K562 (cell line): ENCODE measurements at regions of chr7 and their contacts with region 1.

Region 1: DNA sequence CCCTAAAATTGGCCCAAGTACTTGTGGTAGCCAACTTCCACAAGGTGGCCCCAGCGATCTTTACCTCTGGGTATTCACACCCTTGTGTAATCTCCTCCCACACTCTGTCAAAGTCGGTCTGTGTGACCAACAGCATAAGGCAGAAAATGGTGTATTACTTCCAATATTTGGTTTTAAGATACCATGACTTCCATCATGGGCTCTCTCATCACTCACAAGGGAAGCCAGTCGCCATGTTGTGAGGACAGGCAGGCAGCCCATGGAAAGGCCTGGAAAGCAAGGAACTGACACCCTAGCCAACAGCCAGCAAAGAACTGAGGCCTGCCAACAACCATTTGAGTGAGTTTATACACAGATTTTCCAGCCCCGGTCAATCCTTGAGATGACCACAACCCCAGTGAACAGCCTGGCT is 91.0 kb upstream of the KMT2E start:
- DNase-seq: peak; percentile 54 to 93 (median 68)
- ATAC-seq: peak; percentile 98
- H3K4me3 ChIP-seq: no peak overlapping the region
- H3K27ac ChIP-seq: no peak overlapping the region
- H3K4me1 ChIP-seq: peaks cover 0 to 5% of the 10 kb centered on the region in 2 experiments; a peak in 2 of 5 replicates
- H3K27me3 ChIP-seq: no peaks in the 10 kb centered on the region
- CTCF ChIP-seq: peak; percentile 91 to 98 (median 95)
- EP300 ChIP-seq: peak; percentile 51
- POLR2A ChIP-seq: no peak
- RAD21 ChIP-seq: peak; percentile 94 to 99

Region 2: DNA sequence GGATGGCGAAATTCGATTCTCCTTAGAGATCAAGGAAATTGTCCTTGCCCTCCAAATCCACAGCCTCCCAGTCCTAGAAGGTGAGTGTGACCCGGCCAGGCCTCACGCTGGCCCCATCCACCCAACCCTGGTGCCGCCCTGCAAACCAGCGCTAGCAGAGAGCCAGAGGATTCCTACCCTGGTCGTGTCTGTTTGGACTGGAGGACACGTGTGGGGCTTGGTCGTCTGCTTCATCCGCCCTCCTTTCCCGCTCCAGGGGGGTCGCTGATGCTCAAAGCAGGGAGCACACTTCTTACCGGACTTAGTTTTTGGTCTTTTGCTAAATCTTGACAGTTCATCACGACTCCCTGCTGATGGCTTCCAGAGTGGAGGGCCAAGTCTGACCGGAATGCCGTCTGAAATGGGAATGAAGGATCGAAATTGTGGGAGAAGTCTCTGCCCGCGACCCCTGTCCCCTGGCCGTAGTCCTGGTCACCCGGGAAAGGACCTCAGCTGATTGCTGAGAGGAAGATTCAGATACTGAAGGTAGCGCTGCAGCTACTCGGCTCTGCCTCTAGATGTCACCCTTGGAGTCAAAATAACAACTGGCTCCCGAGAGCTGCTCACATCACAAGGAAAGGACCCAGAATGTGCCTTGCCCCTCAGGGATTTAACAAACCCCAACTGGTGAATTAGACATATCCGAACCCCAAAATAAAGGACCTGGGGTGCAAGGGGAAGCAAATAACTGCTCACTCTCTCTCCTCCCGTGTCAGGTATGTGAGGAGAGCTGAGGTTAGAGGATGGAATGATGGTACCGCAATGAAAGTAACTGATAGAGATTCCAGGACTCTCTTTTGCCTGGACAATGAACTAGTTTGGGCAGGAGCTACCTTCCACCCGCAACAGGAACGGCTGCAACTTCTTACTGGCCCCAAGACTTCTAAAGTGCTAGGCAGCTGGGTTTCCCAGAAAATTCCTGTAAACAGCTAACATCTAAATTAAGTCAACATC is 691.7 kb before region 1 on chr7:
- CTCF ChIA-PET with region 1: interaction called, 5 read pairs
- POLR2A ChIA-PET with region 1: no interaction called
- in situ Hi-C with region 1: no loop called
- intact Hi-C with region 1: loop called (anchors 1 kb)
- DNase-seq: peak; percentile 52 to 76 (median 67)
- ATAC-seq: peak; percentile 99
- H3K4me3 ChIP-seq: no peak overlapping the region
- H3K27ac ChIP-seq: no peak overlapping the region
- H3K4me1 ChIP-seq: 0 out of 5 replicates have a peak, but pooled peaks cover 0 to 2% of the 10 kb centered on the region in 2 experiments
- H3K27me3 ChIP-seq: 0 out of 5 replicates have a peak, but pooled peaks cover 0 to 3% of the 10 kb centered on the region in 2 experiments
- CTCF ChIP-seq: peak; percentile 86 to 97 (median 91)
- EP300 ChIP-seq: no peak
- POLR2A ChIP-seq: no peak
- RAD21 ChIP-seq: peak; percentile 66 to 80

Region 3: GRCh38 chr7:104524850-104525249 is 398.2 kb before region 1 on chr7:
- CTCF ChIA-PET with region 1: no interaction called
- POLR2A ChIA-PET with region 1: no interaction called
- in situ Hi-C with region 1: no loop called
- intact Hi-C with region 1: no loop called
- DNase-seq: no peak
- ATAC-seq: no peak
- H3K4me3 ChIP-seq: no peak overlapping the region
- H3K27ac ChIP-seq: no peak overlapping the region
- H3K4me1 ChIP-seq: no peaks in the 10 kb centered on the region
- H3K27me3 ChIP-seq: no peaks in the 10 kb centered on the region
- CTCF ChIP-seq: no peak
- EP300 ChIP-seq: no peak
- POLR2A ChIP-seq: no peak
- RAD21 ChIP-seq: no peak

Region 4: DNA sequence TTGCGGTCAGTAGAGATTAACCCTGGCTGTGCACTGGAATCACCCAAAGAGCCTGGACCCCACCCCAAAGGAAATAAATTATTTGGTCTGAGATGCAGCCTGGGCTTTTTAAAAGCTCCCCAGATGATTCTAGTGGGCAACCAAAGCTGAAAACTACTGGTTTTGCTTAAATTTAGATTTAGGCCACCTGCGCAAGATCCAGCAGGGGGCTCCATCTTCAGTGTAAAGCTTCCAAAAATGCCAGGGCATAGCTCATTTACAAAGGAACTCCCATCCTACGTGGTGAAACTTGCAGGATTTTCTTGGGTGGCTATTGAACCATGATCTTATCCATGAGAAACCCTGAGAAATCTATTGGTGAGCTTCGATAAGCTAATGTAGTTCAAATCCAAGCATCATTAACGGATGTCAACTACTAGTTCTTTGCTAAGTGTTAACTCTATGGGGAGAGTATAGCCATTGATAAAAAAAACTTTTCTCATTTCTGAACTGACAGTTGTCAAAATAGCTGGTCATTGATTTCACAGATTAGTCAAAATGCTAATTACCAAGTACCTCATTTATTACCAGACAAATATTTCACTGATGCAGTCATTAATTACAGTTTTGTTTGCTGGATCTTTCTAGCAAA is 279.3 kb before region 1 on chr7:
- CTCF ChIA-PET with region 1: interaction called, 5 read pairs
- POLR2A ChIA-PET with region 1: no interaction called
- in situ Hi-C with region 1: no loop called
- intact Hi-C with region 1: loop called (anchors 1 kb)
- DNase-seq: peak; percentile 15 to 35 (median 26)
- ATAC-seq: peak; percentile 57
- H3K4me3 ChIP-seq: no peak overlapping the region
- H3K27ac ChIP-seq: no peak overlapping the region
- H3K4me1 ChIP-seq: no peaks in the 10 kb centered on the region
- H3K27me3 ChIP-seq: peaks cover 3 to 7% of the 10 kb centered on the region in 2 experiments; a peak in 3 of 5 replicates
- CTCF ChIP-seq: peak; percentile 57 to 68 (median 66)
- EP300 ChIP-seq: no peak
- POLR2A ChIP-seq: no peak
- RAD21 ChIP-seq: peak; percentile 51 to 59; a peak in 3 of 4 replicates

Region 5: DNA sequence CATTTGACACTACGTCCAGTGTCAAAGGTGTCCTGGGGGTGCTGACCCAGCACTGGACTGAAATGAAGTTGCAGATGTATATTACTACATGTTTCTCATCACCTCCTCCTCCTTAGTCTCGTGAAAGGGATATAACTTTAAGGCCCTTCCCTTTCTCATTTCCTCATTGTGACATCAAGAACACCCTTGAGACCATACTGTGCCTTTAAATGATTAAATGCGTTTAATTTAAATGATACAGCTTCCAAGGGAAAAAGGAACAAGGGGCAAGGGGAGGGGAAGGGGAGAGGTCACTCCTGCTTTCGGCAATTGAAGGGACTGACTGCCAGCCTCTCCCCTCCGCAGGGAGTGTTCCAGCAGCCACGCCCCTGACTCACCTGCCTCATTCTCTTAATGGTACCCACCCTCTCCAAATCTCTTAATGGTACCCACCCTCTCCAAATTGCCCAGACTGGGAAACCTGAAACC is 10.5 kb after region 1 on chr7:
- CTCF ChIA-PET with region 1: no interaction called
- POLR2A ChIA-PET with region 1: no interaction called
- in situ Hi-C with region 1: no loop called
- intact Hi-C with region 1: no loop called
- DNase-seq: no peak
- ATAC-seq: no peak
- H3K4me3 ChIP-seq: no peak overlapping the region
- H3K27ac ChIP-seq: no peak overlapping the region
- H3K4me1 ChIP-seq: no peaks in the 10 kb centered on the region; a peak in 1 of 5 replicates
- H3K27me3 ChIP-seq: peaks cover 10 to 20% of the 10 kb centered on the region in 2 experiments; a peak in 4 of 5 replicates
- CTCF ChIP-seq: no peak
- EP300 ChIP-seq: no peak
- POLR2A ChIP-seq: no peak
- RAD21 ChIP-seq: no peak

Region 6: DNA sequence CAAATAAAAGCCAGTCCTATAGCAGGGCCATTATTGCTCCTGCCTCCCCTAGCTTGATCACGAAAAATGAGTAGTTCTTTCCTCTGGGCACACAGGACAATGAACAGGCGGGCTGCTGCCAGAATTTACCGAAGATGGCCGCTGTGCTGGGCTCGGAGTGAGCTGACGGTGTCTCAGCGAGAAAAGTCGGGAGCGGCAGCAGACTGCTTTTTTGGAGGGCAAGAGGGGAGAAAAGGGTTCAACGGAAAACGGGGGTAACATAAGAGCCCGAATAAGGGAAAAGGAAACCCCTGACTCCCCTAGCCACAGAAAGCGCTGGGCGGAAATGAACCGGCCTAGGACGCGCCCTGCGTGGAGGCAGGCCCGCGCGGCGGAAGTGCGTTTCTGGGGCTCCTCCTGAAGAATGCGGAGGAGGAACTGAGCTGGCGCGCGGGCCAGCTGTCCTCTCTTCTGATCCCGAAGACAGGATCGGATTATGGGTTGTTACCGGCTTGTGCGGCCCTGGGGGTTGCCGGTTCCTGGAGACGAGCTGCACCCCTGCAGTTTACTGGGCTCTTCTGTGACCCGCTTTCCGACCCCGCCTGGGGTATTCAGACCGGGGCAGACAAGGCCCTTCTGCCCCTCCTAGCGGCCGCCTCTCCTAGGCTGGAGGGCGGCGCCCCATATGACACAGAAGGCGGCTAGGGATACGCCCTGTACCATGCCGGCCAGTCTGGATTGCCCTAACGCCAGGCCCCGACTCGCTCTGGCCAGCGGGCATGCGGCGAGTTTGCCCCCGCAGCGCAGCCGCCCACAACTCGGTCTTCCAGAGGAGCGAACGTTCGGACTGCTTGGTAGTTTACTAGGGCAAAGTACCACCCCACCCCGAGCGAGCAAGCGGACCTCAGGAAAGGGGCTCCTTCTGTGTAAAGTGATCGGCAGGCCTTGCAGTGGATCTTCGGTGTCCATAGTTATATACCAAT is 60.8 kb after region 1 on chr7:
- CTCF ChIA-PET with region 1: interaction called, 10 read pairs
- POLR2A ChIA-PET with region 1: interaction called, 4 read pairs
- in situ Hi-C with region 1: no loop called
- intact Hi-C with region 1: loop called (anchors 1 kb)
- DNase-seq: peak; percentile 89 to 95 (median 92)
- ATAC-seq: peak; percentile 98
- H3K4me3 ChIP-seq: peak overlapping the region; percentile 58
- H3K27ac ChIP-seq: peak overlapping the region; percentile 95
- H3K4me1 ChIP-seq: peaks cover 14 to 19% of the 10 kb centered on the region in 2 experiments; a peak in 4 of 5 replicates
- H3K27me3 ChIP-seq: no peaks in the 10 kb centered on the region
- CTCF ChIP-seq: peak; percentile 74 to 79 (median 75)
- EP300 ChIP-seq: peak; percentile 46
- POLR2A ChIP-seq: peak; percentile 98
- RAD21 ChIP-seq: peak; percentile 58 to 65

Region 7: GRCh38 chr7:105131033-105131656 is 208.1 kb after region 1 on chr7:
- CTCF ChIA-PET with region 1: no interaction called
- POLR2A ChIA-PET with region 1: no interaction called
- in situ Hi-C with region 1: no loop called
- intact Hi-C with region 1: loop called (anchors 5 kb)
- DNase-seq: peak; percentile 80 to 87 (median 84)
- ATAC-seq: peak; percentile 90
- H3K4me3 ChIP-seq: no peak overlapping the region
- H3K27ac ChIP-seq: peak overlapping the region; percentile 76
- H3K4me1 ChIP-seq: peaks cover 13 to 25% of the 10 kb centered on the region in 2 experiments
- H3K27me3 ChIP-seq: no peaks in the 10 kb centered on the region
- CTCF ChIP-seq: no peak
- EP300 ChIP-seq: peak; percentile 52; the same call in 1 of the 2 replicates
- POLR2A ChIP-seq: peak; percentile 38; the same call in 1 of the 2 replicates
- RAD21 ChIP-seq: no peak

Region 8: DNA sequence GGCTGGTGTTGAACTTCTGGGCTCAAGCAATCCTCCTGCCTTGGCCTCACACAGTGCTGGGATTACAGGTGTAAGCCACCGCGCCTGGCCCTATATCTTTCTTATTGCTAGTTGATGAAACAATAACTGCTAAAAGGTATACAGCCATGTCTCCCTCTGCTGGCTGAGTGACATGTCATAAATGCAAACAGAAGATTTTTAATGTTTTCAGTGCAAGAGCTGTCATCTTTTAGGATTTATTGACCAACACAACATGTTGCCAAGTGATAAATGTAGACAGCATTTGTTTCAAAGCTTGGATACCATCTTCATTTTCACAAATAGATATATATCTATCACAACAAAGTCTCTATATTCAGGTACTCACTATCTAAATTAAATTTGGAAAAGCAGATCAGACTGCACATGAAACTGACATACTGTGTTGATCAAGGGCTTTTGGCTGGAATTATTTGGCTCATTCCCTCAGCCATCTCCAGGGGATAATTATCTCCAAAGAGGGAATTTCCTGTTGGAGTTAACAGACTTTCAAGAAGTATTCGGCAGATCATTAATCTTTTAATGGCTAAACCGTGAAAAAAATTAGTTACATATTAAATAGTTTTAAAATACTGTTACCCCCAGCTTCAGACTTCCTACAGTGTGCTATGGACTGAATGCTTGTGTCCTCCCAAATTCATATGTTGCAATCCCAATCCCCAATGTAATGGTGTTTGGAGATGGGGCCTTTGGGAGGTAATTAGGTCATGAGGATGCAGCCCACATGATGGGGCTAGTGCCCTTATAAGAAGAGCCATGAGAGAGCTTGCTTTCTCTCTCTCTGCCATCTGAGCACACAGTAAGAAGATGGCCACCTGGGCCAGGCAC is 507.0 kb after region 1 on chr7:
- CTCF ChIA-PET with region 1: interaction called, 8 read pairs
- POLR2A ChIA-PET with region 1: no interaction called
- in situ Hi-C with region 1: no loop called
- intact Hi-C with region 1: loop called (anchors 2 kb)
- DNase-seq: peak in 3 of 4 experiments; percentile 41 to 82 (median 63)
- ATAC-seq: peak; percentile 90
- H3K4me3 ChIP-seq: no peak overlapping the region
- H3K27ac ChIP-seq: no peak overlapping the region
- H3K4me1 ChIP-seq: peaks cover 0 to 5% of the 10 kb centered on the region in 2 experiments; a peak in 1 of 5 replicates
- H3K27me3 ChIP-seq: no peaks in the 10 kb centered on the region
- CTCF ChIP-seq: peak; percentile 74 to 92 (median 80)
- EP300 ChIP-seq: peak; percentile 41
- POLR2A ChIP-seq: no peak
- RAD21 ChIP-seq: peak; percentile 87 to 95

Region 9: GRCh38 chr7:105461518-105461917 is 538.5 kb after region 1 on chr7:
- CTCF ChIA-PET with region 1: no interaction called
- POLR2A ChIA-PET with region 1: no interaction called
- in situ Hi-C with region 1: no loop called
- intact Hi-C with region 1: no loop called
- DNase-seq: no peak
- ATAC-seq: no peak
- H3K4me3 ChIP-seq: no peak overlapping the region
- H3K27ac ChIP-seq: no peak overlapping the region
- H3K4me1 ChIP-seq: no peaks in the 10 kb centered on the region
- H3K27me3 ChIP-seq: no peaks in the 10 kb centered on the region
- CTCF ChIP-seq: no peak
- EP300 ChIP-seq: no peak
- POLR2A ChIP-seq: no peak
- RAD21 ChIP-seq: no peak

Region 10: DNA sequence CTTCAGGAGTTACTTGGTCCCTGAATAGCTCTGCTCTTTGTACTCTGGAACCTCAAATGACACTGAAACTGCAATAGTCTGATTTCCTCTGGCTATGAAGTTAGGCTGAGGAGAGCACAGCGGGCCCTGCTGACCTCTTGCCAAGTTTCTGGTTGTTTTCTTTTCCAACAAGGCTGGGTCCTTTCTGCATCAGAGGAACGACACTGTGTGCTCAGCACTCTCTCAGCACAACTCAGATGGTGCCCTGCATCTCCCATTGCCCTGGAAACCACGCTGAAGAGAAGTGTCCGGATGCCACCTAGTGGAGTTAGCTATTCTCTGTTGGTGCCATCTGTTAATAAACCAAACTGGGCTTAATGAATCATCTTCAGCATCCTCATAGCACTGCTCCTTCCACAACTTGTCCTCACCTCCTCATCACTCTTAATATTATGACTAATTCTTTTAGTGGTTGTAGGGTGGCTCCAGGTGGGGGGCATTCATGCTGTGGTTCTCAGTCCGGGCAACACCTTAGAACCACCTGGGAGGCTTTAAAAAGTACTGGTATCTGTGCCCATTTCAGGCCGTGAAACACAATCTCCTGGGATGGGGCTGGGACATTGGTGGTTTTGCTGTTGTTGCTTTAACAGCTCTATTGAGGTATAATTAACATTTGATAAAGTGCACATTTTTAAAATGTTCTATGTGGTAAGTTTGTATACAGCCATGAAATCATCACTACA is 666.5 kb after region 1 on chr7:
- CTCF ChIA-PET with region 1: no interaction called
- POLR2A ChIA-PET with region 1: interaction called, 3 read pairs
- in situ Hi-C with region 1: no loop called
- intact Hi-C with region 1: loop called (anchors 2 kb)
- DNase-seq: peak in 3 of 4 experiments; percentile 37 to 64 (median 47)
- ATAC-seq: peak; percentile 68
- H3K4me3 ChIP-seq: no peak overlapping the region
- H3K27ac ChIP-seq: no peak overlapping the region
- H3K4me1 ChIP-seq: peaks cover 0 to 13% of the 10 kb centered on the region in 2 experiments; a peak in 3 of 5 replicates
- H3K27me3 ChIP-seq: no peaks in the 10 kb centered on the region
- CTCF ChIP-seq: peak; percentile 66 to 75 (median 71)
- EP300 ChIP-seq: no peak
- POLR2A ChIP-seq: no peak
- RAD21 ChIP-seq: peak; percentile 25 to 72; a peak in 3 of 4 replicates